ENCODE measurements at regions of chr17 and their contacts with region 1.

Region 1: GRCh38 chr17:30278032-30278431 is 13.7 kb downstream of the BLMH start:
- DNase-seq: peak in 1 of 4 donors; percentile 55
- ATAC-seq: no peak
- H3K4me3 ChIP-seq: no peak overlapping the region
- H3K27ac ChIP-seq: no peak overlapping the region
- H3K4me1 ChIP-seq: no peaks in the 10 kb centered on the region
- H3K27me3 ChIP-seq: no peaks in the 10 kb centered on the region
- CTCF ChIP-seq: peak; percentile 22 to 34

Region 2: DNA sequence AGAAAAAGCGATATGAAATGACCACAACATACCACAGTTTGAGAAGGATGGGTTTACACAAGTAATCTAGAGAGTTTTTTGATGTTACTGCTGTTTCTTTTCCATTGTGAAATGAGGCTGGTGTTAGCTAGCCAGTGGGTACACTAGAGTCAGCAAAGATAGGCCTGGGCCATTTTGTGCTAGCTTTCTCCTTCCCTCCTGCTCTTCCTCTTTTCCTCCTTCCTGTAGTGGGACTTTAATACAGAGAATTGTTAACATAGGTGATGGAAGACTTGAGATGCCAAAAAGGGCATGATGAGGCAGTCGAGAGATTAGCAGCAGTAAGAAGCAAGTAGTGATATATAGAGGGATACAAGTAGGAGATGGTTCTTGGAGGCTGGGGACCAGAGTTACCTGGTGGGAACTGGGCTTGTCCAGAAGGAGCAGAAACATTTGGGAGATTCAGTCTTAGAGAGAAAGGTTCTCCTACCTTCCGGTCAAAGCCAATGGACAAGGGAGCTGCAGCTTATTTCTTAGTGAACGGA is 153.7 kb before region 1 on chr17:
- intact Hi-C with region 1: loop called in 1 of 2 experiments (anchors 10 kb)
- DNase-seq: no peak
- ATAC-seq: no peak
- H3K4me3 ChIP-seq: no peak overlapping the region
- H3K27ac ChIP-seq: no peak overlapping the region
- H3K4me1 ChIP-seq: peaks cover 0 to 55% of the 10 kb centered on the region in 2 donors
- H3K27me3 ChIP-seq: no peaks in the 10 kb centered on the region
- CTCF ChIP-seq: no peak

Region 3: GRCh38 chr17:30323895-30324319 is 45.9 kb after region 1 on chr17:
- intact Hi-C with region 1: no loop called
- DNase-seq: peak in 1 of 4 donors; percentile 53
- ATAC-seq: peak; percentile 52
- H3K4me3 ChIP-seq: no peak overlapping the region
- H3K27ac ChIP-seq: no peak overlapping the region
- H3K4me1 ChIP-seq: peaks cover 0 to 14% of the 10 kb centered on the region in 2 donors
- H3K27me3 ChIP-seq: no peaks in the 10 kb centered on the region
- CTCF ChIP-seq: no peak